Activated CD4-positive, alpha-beta T cell treated with anti-CD3 and anti-CD28 coated beads for 36 hours (primary cell): ENCODE measurements at regions of chr6 and their contacts with region 1.

Region 1: DNA sequence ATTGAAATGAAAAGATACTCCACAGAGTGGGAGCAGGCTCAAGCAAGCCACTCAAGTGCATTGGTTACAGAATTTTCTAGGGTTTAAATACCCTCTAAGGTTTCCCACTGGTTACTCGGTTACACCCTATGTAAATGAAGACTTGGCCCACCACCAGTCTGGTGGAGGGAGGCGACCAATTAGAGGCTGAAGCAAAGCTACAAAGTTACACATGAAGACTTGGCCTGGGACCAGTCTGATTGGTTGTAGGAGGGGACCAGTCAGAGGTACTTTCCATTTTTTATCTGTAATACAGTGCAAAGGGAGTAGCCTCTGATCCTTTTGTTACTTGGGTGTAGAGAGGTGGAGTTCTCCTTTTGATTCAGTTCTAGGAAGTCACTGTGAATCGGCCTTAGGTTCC is 7.6 kb downstream of the SRSF12 start:
- DNase-seq: no peak
- ATAC-seq: peak; percentile 19
- H3K4me3 Mint-ChIP-seq: no peak overlapping the region
- H3K27ac Mint-ChIP-seq: no peak overlapping the region
- H3K4me1 Mint-ChIP-seq: no peaks in the 10 kb centered on the region
- H3K27me3 Mint-ChIP-seq: no peaks in the 10 kb centered on the region

Region 2: GRCh38 chr6:89058627-89059026 is 51.7 kb before region 1 on chr6:
- CTCF ChIA-PET with region 1: no interaction called
- POLR2A ChIA-PET with region 1: no interaction called
- intact Hi-C with region 1: loop called in 1 of 2 experiments (anchors 2 kb)
- DNase-seq: no peak
- ATAC-seq: no peak
- H3K4me3 Mint-ChIP-seq: no peak overlapping the region
- H3K27ac Mint-ChIP-seq: no peak overlapping the region
- H3K4me1 Mint-ChIP-seq: no peaks in the 10 kb centered on the region
- H3K27me3 Mint-ChIP-seq: no peaks in the 10 kb centered on the region

Region 3: GRCh38 chr6:89270951-89271721 is 160.9 kb after region 1 on chr6:
- CTCF ChIA-PET with region 1: no interaction called
- POLR2A ChIA-PET with region 1: no interaction called
- intact Hi-C with region 1: no loop called
- DNase-seq: no peak
- ATAC-seq: no peak
- H3K4me3 Mint-ChIP-seq: no peak overlapping the region
- H3K27ac Mint-ChIP-seq: no peak overlapping the region
- H3K4me1 Mint-ChIP-seq: no peaks in the 10 kb centered on the region
- H3K27me3 Mint-ChIP-seq: no peaks in the 10 kb centered on the region